ENCODE measurements at regions of chr11 and their contacts with region 1.

Region 1: GRCh38 chr11:61816736-61817455 is at the start of gene FADS1:
- H3K4me3 Mint-ChIP-seq: peak within 1 kb of the TSS; percentile 92
- H3K27ac Mint-ChIP-seq: peak within 1 kb of the TSS; percentile 94
- H3K4me1 Mint-ChIP-seq: peaks cover 36% of the 10 kb centered on the region
- H3K27me3 Mint-ChIP-seq: no peaks in the 10 kb centered on the region

Region 2: GRCh38 chr11:61827571-61828378 is 10.9 kb after region 1 on chr11 and contains the start of gene FADS2:
- intact Hi-C with region 1: loop called (anchors 1 kb)
- H3K4me3 Mint-ChIP-seq: peak within 1 kb of the TSS; percentile 97
- H3K27ac Mint-ChIP-seq: peak within 1 kb of the TSS; percentile 97
- H3K4me1 Mint-ChIP-seq: peaks cover 58% of the 10 kb centered on the region
- H3K27me3 Mint-ChIP-seq: no peaks in the 10 kb centered on the region

Region 3: GRCh38 chr11:61834278-61835048 is 17.6 kb after region 1 on chr11:
- intact Hi-C with region 1: loop called (anchors 2 kb)
- H3K4me3 Mint-ChIP-seq: peak overlapping the region; percentile 67
- H3K27ac Mint-ChIP-seq: peak overlapping the region; percentile 94
- H3K4me1 Mint-ChIP-seq: peaks cover 66% of the 10 kb centered on the region
- H3K27me3 Mint-ChIP-seq: no peaks in the 10 kb centered on the region

Region 4: DNA sequence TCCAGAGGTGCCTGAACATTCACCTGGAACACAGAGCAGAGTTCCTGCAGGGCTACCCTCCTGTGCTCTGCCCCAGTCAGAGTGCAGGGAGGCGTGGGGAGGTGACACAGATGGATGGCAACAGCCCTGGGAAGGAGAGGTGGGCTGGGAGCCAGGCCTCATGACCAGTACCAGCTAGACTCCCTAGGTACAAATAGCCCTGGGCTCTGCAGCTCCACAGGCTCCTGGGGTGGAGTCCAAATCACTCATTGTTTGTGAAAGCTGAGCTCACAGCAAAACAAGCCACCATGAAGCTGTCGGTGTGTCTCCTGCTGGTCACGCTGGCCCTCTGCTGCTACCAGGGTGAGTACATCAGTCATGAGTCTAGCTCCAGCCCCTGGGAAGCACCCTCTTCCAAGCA is 425.1 kb after region 1 on chr11 and contains the start of gene SCGB1D2:
- intact Hi-C with region 1: no loop called
- H3K4me3 Mint-ChIP-seq: no peak within 1 kb of the TSS
- H3K27ac Mint-ChIP-seq: no peak within 1 kb of the TSS
- H3K4me1 Mint-ChIP-seq: no peaks in the 10 kb centered on the region
- H3K27me3 Mint-ChIP-seq: peaks cover 21% of the 10 kb centered on the region